ENCODE measurements at regions of chr12 and their contacts with region 1.

Region 1: GRCh38 chr12:113244047-113244460 is 22.8 kb downstream of the TPCN1 start:
- DNase-seq: peak; percentile 71 to 83 (median 76)
- ATAC-seq: peak; percentile 11 to 47 (median 29)
- H3K4me3 ChIP-seq: peak overlapping the region in 9 of 12 donors; percentile 11 to 49 (median 33)
- H3K27ac ChIP-seq: peak overlapping the region; percentile 74 to 94 (median 88)
- H3K4me1 ChIP-seq: peaks cover 14 to 95% (median 80%) of the 10 kb centered on the region in 12 donors
- H3K27me3 ChIP-seq: no peaks in the 10 kb centered on the region
- CTCF ChIP-seq: no peak
- POLR2A ChIP-seq: no peak

Region 2: DNA sequence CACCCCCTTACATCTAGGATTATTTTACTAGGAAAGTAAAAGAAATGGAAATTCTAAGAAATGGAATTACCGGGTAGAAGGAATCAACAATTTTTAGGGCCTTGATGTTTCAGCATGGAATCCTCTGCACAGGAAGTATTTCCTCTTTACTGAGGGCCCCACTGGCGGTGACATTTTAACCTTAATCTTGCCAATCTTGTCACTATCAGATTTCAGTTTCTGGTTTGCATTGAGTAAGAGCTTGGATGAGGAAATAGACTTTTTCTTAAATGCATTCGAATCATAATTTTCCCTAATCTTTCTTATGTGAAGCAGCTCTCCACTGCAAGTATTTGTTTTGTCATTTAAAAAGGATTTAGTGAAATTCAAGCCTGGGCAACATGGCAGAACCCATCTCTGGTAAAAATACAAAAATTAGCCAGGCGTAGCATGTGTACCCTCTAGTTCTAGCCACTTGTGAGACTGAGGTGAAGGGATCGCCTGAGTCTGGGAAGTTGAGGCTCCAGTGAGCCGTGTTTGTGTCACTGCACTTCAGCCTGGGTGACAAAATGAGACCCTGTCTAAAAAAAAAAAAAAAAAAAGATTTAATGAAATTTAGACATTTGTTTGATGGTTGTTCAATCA is 17.9 kb after region 1 on chr12:
- intact Hi-C with region 1: loop called in 1 of 10 experiments (anchors 1 kb)
- DNase-seq: no peak
- ATAC-seq: no peak
- H3K4me3 ChIP-seq: no peak overlapping the region
- H3K27ac ChIP-seq: peak overlapping the region in 10 of 12 donors; percentile 6 to 81 (median 70)
- H3K4me1 ChIP-seq: peaks cover 10 to 57% (median 39%) of the 10 kb centered on the region in 12 donors
- H3K27me3 ChIP-seq: no peaks in the 10 kb centered on the region
- CTCF ChIP-seq: no peak
- POLR2A ChIP-seq: no peak